ENCODE measurements at regions of chr22 and their contacts with region 1.

Region 1: GRCh38 chr22:31970490-31971444 is 26.4 kb downstream of the YWHAH start:
- DNase-seq: peak; percentile 96
- H3K4me3 ChIP-seq: peak overlapping the region; percentile 0 to 69 (median 41)
- H3K27ac ChIP-seq: peak overlapping the region in 7 of 8 donors; percentile 8 to 61 (median 39)
- H3K4me1 ChIP-seq: peaks cover 8 to 21% (median 17%) of the 10 kb centered on the region in 6 donors
- H3K27me3 ChIP-seq: peaks cover 0 to 5% (median 0%) of the 10 kb centered on the region in 7 donors
- CTCF ChIP-seq: peak; percentile 78 to 99 (median 96)
- POLR2A ChIP-seq: no peak

Region 2: GRCh38 chr22:31661851-31662656 is 308.7 kb before region 1 on chr22 and contains the start of gene PISD:
- intact Hi-C with region 1: loop called (anchors 10 kb)
- DNase-seq: peak; percentile 98
- H3K4me3 ChIP-seq: peak within 1 kb of the TSS; percentile 96 to 100 (median 99)
- H3K27ac ChIP-seq: peak within 1 kb of the TSS; percentile 58 to 87 (median 78)
- H3K4me1 ChIP-seq: peaks cover 8 to 50% (median 32%) of the 10 kb centered on the region in 6 donors
- H3K27me3 ChIP-seq: no peaks in the 10 kb centered on the region
- CTCF ChIP-seq: peak in 2 of 11 experiments; percentile 27 to 35
- POLR2A ChIP-seq: peak in 1 of 3 donors; percentile 18
- total RNA-seq, gene PISD: 52.6 to 108 (median 83.0) TPM

Region 3: GRCh38 chr22:32080904-32081303 is 110.1 kb after region 1 on chr22:
- intact Hi-C with region 1: loop called (anchors 10 kb)
- DNase-seq: no peak
- H3K4me3 ChIP-seq: no peak overlapping the region
- H3K27ac ChIP-seq: no peak overlapping the region
- H3K4me1 ChIP-seq: peaks cover 0 to 9% (median 0%) of the 10 kb centered on the region in 6 donors
- H3K27me3 ChIP-seq: no peaks in the 10 kb centered on the region
- CTCF ChIP-seq: peak; percentile 32 to 71 (median 63)
- POLR2A ChIP-seq: no peak

Region 4: DNA sequence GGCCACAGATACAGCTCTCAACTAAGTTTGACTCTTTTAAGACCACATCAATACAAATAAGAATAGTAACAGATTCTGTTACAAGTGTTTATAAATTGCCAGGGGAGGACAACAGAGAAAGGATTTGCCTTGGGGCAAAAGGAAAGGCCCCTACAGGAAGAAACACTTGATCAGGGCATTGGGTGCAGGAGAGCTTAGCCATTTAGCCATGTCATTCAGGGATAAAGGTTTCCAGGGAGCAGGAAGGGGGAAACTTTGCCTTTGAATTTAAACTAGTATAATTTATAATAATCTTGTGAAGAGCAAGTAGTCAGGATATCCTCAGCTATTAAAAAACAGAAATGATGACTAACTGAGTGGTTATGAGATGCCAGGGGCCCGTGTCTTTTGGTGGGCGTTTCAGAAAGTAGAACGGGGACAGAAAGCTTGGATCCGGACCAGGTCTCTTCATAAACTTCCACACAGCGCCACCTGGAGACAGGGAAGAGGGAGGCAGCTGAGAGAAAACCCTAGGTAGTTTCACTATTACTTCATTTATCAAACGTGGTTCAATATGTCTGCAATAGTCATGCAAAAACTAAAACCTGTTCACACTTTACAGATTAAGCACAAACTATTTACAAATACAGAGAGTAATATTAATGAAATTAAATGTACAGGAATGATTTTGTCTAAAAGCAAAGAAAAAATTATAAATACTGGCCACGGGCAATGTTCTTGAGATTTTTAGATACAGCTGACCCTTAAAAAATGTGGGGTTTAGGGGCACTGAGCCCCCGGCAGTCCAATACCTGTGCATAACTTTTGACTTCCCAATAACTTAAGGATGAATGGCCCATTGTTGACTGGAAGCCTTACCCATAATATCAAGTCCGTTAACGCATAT is 295.4 kb after region 1 on chr22:
- intact Hi-C with region 1: loop called (anchors 10 kb)
- DNase-seq: peak; percentile 80
- H3K4me3 ChIP-seq: peak overlapping the region in 1 of 8 donors; percentile 11
- H3K27ac ChIP-seq: peak overlapping the region in 2 of 8 donors; percentile 25 to 30
- H3K4me1 ChIP-seq: peaks cover 0 to 11% (median 9%) of the 10 kb centered on the region in 6 donors
- H3K27me3 ChIP-seq: peaks cover 0 to 5% (median 0%) of the 10 kb centered on the region in 7 donors
- CTCF ChIP-seq: peak; percentile 55 to 92 (median 77)
- POLR2A ChIP-seq: no peak

Region 5: GRCh38 chr22:32457031-32457430 is 486.3 kb after region 1 on chr22:
- intact Hi-C with region 1: no loop called
- DNase-seq: no peak
- H3K4me3 ChIP-seq: no peak overlapping the region
- H3K27ac ChIP-seq: no peak overlapping the region
- H3K4me1 ChIP-seq: no peaks in the 10 kb centered on the region
- H3K27me3 ChIP-seq: peaks cover 0 to 70% (median 0%) of the 10 kb centered on the region in 7 donors
- CTCF ChIP-seq: no peak
- POLR2A ChIP-seq: no peak

Measured in spleen (tissue), 13 donors.